ENCODE measurements at regions of chr3 and their contacts with region 1.

Region 1: GRCh38 chr3:187164885-187165543 is 25.7 kb upstream of the RPL39L start:
- DNase-seq: peak; percentile 51

Region 2: GRCh38 chr3:186849374-186849975 is 315.5 kb before region 1 on chr3:
- CTCF ChIA-PET with region 1: interaction called, 11 read pairs
- POLR2A ChIA-PET with region 1: no interaction called
- DNase-seq: peak; percentile 14

Region 3: GRCh38 chr3:187112934-187113793 is 51.9 kb before region 1 on chr3:
- CTCF ChIA-PET with region 1: interaction called, 10 read pairs
- POLR2A ChIA-PET with region 1: interaction called, 3 read pairs
- DNase-seq: no peak